ENCODE measurements at regions of chr1 and their contacts with region 1.

Region 1: DNA sequence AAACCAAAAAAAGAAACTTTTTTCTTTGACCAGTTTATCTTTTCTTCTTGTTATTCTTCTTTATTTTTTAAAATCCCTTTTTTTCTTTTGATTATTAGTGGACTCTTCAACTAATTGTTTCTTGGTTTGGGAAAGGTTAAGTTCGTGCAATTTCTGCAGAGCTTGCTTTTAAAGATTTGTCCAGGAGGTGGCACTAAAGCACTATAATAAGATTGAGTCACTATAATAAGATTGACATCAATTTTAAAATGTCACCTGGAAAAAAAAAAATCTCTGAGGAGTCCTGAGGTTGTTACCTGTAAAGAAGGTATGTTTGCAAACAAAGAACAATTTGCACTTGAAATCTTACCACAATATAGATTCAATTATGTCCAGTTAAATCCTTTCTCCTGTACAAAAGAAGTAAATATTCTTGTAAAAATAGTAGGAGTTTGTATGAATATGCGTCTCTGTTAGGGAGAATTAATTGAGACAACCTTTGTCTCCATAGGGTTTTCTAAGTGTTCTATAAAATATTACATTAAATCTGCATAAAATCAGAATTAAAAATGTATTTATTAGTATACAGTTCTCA is 166.7 kb downstream of the ADGRL4 start:
- DNase-seq: no peak
- ATAC-seq: no peak
- H3K4me3 ChIP-seq: no peak overlapping the region
- H3K27ac ChIP-seq: no peak overlapping the region
- H3K4me1 ChIP-seq: peaks cover 0 to 14% (median 3%) of the 10 kb centered on the region in 12 donors
- H3K27me3 ChIP-seq: no peaks in the 10 kb centered on the region
- CTCF ChIP-seq: peak; percentile 44 to 83 (median 70)
- POLR2A ChIP-seq: no peak

Region 2: GRCh38 chr1:78743626-78744025 is 96.2 kb before region 1 on chr1:
- intact Hi-C with region 1: no loop called
- DNase-seq: no peak
- ATAC-seq: no peak
- H3K4me3 ChIP-seq: no peak overlapping the region
- H3K27ac ChIP-seq: no peak overlapping the region
- H3K4me1 ChIP-seq: no peaks in the 10 kb centered on the region
- H3K27me3 ChIP-seq: no peaks in the 10 kb centered on the region
- CTCF ChIP-seq: no peak
- POLR2A ChIP-seq: no peak

Region 3: GRCh38 chr1:79193211-79194079 is 353.7 kb after region 1 on chr1:
- intact Hi-C with region 1: loop called in 9 of 10 experiments (anchors 1 to 5 kb)
- DNase-seq: peak in 1 of 5 donors; percentile 18
- ATAC-seq: peak in 3 of 4 donors; percentile 52 to 92 (median 63)
- H3K4me3 ChIP-seq: no peak overlapping the region
- H3K27ac ChIP-seq: peak overlapping the region in 8 of 12 donors; percentile 15 to 65 (median 26)
- H3K4me1 ChIP-seq: peaks cover 0 to 10% (median 0%) of the 10 kb centered on the region in 12 donors
- H3K27me3 ChIP-seq: no peaks in the 10 kb centered on the region
- CTCF ChIP-seq: no peak
- POLR2A ChIP-seq: no peak

Region 4: GRCh38 chr1:79353224-79353623 is 513.4 kb after region 1 on chr1:
- intact Hi-C with region 1: loop called in 7 of 10 experiments (anchors 2 to 10 kb)
- DNase-seq: peak in 2 of 5 donors; percentile 18 to 20
- ATAC-seq: peak in 2 of 4 donors; percentile 36 to 38
- H3K4me3 ChIP-seq: no peak overlapping the region
- H3K27ac ChIP-seq: no peak overlapping the region
- H3K4me1 ChIP-seq: no peaks in the 10 kb centered on the region
- H3K27me3 ChIP-seq: no peaks in the 10 kb centered on the region
- CTCF ChIP-seq: peak in 11 of 12 donors; percentile 19 to 59 (median 33)
- POLR2A ChIP-seq: no peak